ENCODE measurements at regions of chr17 and their contacts with region 1.

Region 1: GRCh38 chr17:59440784-59441441 is 109.5 kb downstream of the YPEL2 start:
- DNase-seq: peak; percentile 87 to 89
- H3K4me3 ChIP-seq: no peak overlapping the region
- H3K4me3 Mint-ChIP-seq: no peak overlapping the region
- H3K27ac Mint-ChIP-seq: no peak overlapping the region
- H3K4me1 ChIP-seq: no peaks in the 10 kb centered on the region
- H3K4me1 Mint-ChIP-seq: peaks cover 7% of the 10 kb centered on the region
- H3K27me3 ChIP-seq: no peaks in the 10 kb centered on the region
- H3K27me3 Mint-ChIP-seq: no peaks in the 10 kb centered on the region
- CTCF ChIP-seq: peak; percentile 82 to 90

Region 2: GRCh38 chr17:59220376-59221158 is 220.3 kb before region 1 on chr17 and contains the start of gene GDPD1:
- CTCF ChIA-PET with region 1: no interaction called
- POLR2A ChIA-PET with region 1: no interaction called
- intact Hi-C with region 1: loop called (anchors 2 kb)
- DNase-seq: peak; percentile 95 to 99
- H3K4me3 ChIP-seq: peak within 1 kb of the TSS; percentile 51
- H3K4me3 Mint-ChIP-seq: peak within 1 kb of the TSS; percentile 95
- H3K27ac Mint-ChIP-seq: peak within 1 kb of the TSS; percentile 88
- H3K4me1 ChIP-seq: no peaks in the 10 kb centered on the region
- H3K4me1 Mint-ChIP-seq: no peaks in the 10 kb centered on the region
- H3K27me3 ChIP-seq: no peaks in the 10 kb centered on the region
- H3K27me3 Mint-ChIP-seq: no peaks in the 10 kb centered on the region
- CTCF ChIP-seq: peak; percentile 53 to 54
- total RNA-seq, gene GDPD1: 1.2 and 2.9 TPM in 2 replicates

Region 3: GRCh38 chr17:59329638-59330313 is 111.1 kb before region 1 on chr17:
- CTCF ChIA-PET with region 1: interaction called, 19 read pairs
- POLR2A ChIA-PET with region 1: no interaction called
- intact Hi-C with region 1: loop called (anchors 1 kb)
- DNase-seq: peak; percentile 80 to 82
- H3K4me3 ChIP-seq: peak overlapping the region; percentile 90
- H3K4me3 Mint-ChIP-seq: peak overlapping the region; percentile 73
- H3K27ac Mint-ChIP-seq: peak overlapping the region; percentile 29
- H3K4me1 ChIP-seq: peaks cover 21% of the 10 kb centered on the region
- H3K4me1 Mint-ChIP-seq: peaks cover 26% of the 10 kb centered on the region
- H3K27me3 ChIP-seq: no peaks in the 10 kb centered on the region
- H3K27me3 Mint-ChIP-seq: peaks cover 4% of the 10 kb centered on the region
- CTCF ChIP-seq: peak; percentile 89 to 92

Region 4: DNA sequence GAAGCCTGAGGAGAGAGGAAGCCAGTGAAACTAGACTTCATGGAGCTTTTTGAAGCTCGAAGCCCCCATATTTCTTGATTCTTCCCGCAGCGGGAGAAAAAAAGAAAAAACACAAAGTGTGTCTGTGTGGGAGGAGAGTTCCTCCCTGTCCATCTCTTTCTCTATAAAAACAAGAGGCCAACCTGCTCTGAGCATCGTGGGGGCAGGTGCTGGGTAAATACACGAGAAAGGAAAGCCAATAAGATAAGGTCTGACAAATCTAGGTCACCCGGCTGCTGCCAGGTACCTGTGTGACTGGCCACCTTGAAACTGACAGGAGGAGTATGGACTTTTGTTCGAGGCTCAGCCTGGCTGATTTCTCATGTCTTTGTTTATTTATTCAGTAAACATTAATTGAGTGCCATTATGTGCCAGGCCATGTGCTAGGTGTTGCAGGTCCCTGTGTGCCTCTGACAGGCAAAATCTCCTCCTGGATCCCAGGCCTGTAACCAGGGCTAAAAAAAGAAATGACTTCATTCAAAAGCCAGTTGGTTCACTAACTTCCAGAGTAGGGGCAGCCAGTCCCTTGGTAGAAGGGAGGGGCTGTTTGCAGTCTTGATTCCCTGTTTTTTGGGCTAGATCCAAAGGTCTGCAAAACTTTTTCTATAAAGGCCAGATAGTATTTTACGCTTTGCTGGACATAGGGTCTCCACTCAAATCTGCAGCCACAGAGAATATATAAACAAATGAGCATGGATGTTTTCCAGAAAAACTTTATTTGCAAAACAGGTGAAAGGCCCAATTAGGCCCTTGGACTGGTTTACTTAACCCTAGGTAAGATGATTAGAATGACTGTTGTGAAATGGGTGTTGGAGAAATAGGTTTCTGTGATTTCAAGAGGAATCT is 73.9 kb before region 1 on chr17:
- CTCF ChIA-PET with region 1: interaction called, 3 read pairs
- POLR2A ChIA-PET with region 1: no interaction called
- intact Hi-C with region 1: loop called (anchors 2 kb)
- DNase-seq: peak; percentile 86 to 90
- H3K4me3 ChIP-seq: no peak overlapping the region; the same call in 1 of the 2 replicates
- H3K4me3 Mint-ChIP-seq: peak overlapping the region; percentile 48
- H3K27ac Mint-ChIP-seq: peak overlapping the region; percentile 30
- H3K4me1 ChIP-seq: peaks cover 39% of the 10 kb centered on the region
- H3K4me1 Mint-ChIP-seq: peaks cover 30% of the 10 kb centered on the region
- H3K27me3 ChIP-seq: no peaks in the 10 kb centered on the region
- H3K27me3 Mint-ChIP-seq: no peaks in the 10 kb centered on the region
- CTCF ChIP-seq: no peak

Measured in Caco-2 (cell line).